ENCODE measurements at regions of chr5 and their contacts with region 1.

Region 1: DNA sequence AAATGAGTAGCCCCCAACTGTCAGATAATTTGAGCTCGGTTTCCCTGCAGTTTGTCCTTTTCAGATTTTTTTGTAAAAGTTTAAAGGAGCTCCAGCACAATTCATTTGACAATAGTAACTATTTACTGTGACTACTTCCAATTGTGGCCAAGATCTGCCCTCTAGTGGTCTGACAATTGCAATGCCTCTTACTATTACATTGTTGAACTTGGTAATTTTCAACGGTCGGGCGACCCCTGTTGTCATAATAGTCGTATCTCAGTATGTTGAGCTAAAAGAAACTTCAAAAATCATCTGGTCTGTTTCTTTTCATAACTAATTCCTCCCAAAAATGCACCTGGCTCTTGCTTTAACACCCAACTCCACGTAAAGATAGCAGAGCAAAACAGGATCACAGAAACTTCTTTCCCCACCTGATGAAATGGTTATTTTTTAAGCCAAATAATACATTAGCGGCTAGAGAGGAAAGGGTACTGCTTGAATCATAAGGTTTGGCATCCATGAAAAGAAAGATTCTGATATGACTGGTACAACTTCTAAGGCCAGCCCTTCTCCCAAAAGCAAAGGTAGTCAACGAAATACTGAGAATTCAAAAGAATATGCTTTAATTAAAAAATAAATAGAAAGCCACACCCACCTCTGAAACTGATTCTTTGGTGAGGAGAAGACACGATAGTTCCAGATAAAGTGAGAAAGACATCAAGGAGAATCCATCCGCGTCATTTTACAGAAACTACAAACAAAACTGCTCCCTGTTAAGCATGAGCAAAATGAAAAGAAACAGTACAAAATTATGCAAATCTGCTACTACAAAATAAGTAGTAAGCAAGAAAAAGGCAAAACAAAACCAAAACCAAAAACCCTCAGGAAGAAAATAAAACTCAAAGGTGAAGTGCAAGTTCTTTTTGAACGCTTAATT is 76.9 kb upstream of the HTR4 start:
- DNase-seq: peak; percentile 72
- H3K4me3 ChIP-seq: no peak overlapping the region; the same call in 1 of the 2 replicates
- H3K27ac ChIP-seq: no peak overlapping the region
- H3K27me3 ChIP-seq: peaks cover 3% of the 10 kb centered on the region
- CTCF ChIP-seq: peak; percentile 84

Region 2: GRCh38 chr5:147949711-147950573 is 781.3 kb before region 1 on chr5:
- CTCF ChIA-PET with region 1: interaction called, 18 read pairs
- POLR2A ChIA-PET with region 1: no interaction called
- DNase-seq: no peak
- H3K4me3 ChIP-seq: no peak overlapping the region
- H3K27ac ChIP-seq: no peak overlapping the region
- H3K27me3 ChIP-seq: no peaks in the 10 kb centered on the region
- CTCF ChIP-seq: peak; percentile 66

Region 3: DNA sequence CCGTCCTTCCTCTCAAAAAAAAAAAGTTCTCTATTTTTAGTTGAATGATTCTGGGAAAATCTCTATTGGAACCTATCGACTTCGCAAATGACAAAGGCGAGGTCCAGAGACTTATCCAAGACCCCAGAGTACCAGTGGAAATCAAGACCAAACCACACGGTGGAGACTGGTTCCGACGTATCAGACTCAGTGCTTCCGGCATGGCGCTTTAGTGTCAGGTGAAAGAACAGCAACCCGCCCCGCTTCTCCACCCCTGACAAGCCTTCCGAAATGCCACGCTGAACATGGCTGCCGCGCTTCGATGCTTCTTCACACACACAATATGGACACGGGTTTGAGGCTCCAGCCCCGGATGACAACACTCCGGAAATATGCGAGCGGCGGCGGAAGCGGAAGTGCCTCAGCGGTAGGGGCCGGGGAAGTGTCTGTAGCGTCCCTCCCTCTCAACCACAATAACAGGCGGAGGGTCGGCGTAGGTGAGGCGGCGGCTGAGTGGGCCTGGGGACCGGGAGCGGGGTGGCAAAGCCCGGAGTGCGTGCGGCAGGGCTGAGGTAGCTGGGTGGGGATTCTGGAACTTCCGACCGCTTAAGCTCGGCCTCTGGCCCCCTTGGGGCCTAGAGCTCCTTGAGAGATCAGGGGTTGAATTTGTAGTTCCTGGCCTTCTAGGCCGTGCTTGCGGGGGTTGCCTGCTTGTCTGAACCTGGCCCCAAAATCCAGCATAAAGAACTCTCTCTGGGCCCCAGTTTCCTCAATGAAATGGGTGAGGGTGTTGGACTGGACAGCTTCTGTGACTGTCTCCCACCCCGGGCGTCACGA is 347.4 kb before region 1 on chr5 and contains the start of gene FBXO38:
- CTCF ChIA-PET with region 1: interaction called, 28 read pairs
- POLR2A ChIA-PET with region 1: no interaction called
- DNase-seq: peak; percentile 86
- H3K4me3 ChIP-seq: peak within 1 kb of the TSS; percentile 78
- H3K27ac ChIP-seq: peak within 1 kb of the TSS; percentile 90
- H3K27me3 ChIP-seq: no peaks in the 10 kb centered on the region
- CTCF ChIP-seq: no peak
- polyA plus RNA-seq, gene FBXO38: 40.9 and 42.5 TPM in 2 replicates

Region 4: DNA sequence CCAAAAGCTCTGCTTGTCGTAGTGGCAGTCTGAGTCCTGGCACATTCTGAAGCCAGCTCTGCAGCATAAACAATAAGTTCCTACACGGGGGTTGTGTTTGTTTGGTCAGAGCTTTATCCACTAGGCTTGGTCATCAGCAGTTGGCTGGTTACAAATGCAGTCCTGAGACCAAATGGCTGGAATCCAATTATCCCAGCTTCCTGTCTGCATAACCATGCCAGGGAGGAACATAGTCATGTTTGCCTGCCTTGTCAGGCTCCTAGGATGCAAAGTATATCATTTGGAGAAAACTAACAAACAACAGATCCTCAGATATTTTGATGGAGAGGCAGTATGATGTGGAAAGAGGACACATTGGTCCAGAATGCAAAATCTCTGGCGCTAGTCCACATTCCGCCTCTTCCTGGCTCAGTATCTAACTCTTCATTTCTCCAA is 261.7 kb before region 1 on chr5:
- CTCF ChIA-PET with region 1: interaction called, 32 read pairs
- POLR2A ChIA-PET with region 1: no interaction called
- DNase-seq: peak; percentile 13
- H3K4me3 ChIP-seq: no peak overlapping the region
- H3K27ac ChIP-seq: no peak overlapping the region
- H3K27me3 ChIP-seq: no peaks in the 10 kb centered on the region
- CTCF ChIP-seq: no peak

Region 5: GRCh38 chr5:148620091-148620490 is 111.1 kb before region 1 on chr5:
- CTCF ChIA-PET with region 1: no interaction called
- POLR2A ChIA-PET with region 1: no interaction called
- DNase-seq: no peak
- H3K4me3 ChIP-seq: no peak overlapping the region
- H3K27ac ChIP-seq: no peak overlapping the region
- H3K27me3 ChIP-seq: no peaks in the 10 kb centered on the region
- CTCF ChIP-seq: no peak

Region 6: GRCh38 chr5:148820461-148821395 is 89.5 kb after region 1 on chr5:
- CTCF ChIA-PET with region 1: interaction called, 12 read pairs
- POLR2A ChIA-PET with region 1: no interaction called
- DNase-seq: no peak
- H3K4me3 ChIP-seq: no peak overlapping the region
- H3K27ac ChIP-seq: no peak overlapping the region
- H3K27me3 ChIP-seq: no peaks in the 10 kb centered on the region
- CTCF ChIP-seq: peak; percentile 68

Region 7: DNA sequence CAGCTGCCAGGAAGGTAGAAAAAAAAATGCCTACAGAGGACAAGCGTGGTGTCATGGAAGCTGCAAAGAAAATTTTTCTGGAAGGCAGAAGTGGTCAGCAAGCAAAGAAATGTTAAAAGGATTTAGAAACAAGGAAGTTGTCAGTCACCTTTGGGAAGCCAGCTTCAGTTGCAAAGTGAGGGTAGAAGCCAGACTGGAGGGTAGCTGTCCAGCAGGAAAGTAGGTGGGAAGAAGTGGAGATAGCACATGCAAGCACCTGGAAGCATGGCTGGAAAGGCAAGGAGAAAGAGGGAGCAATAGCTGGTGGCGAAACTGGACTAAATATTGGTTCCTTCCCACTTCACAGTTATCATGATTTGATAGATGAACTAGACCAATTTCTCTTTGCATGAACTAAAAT is 149.5 kb after region 1 on chr5:
- CTCF ChIA-PET with region 1: no interaction called
- POLR2A ChIA-PET with region 1: no interaction called
- DNase-seq: no peak
- H3K4me3 ChIP-seq: no peak overlapping the region
- H3K27ac ChIP-seq: no peak overlapping the region
- H3K27me3 ChIP-seq: no peaks in the 10 kb centered on the region
- CTCF ChIP-seq: no peak

Region 8: GRCh38 chr5:149018909-149019443 is 287.8 kb after region 1 on chr5:
- CTCF ChIA-PET with region 1: interaction called, 12 read pairs
- POLR2A ChIA-PET with region 1: no interaction called
- DNase-seq: no peak
- H3K4me3 ChIP-seq: no peak overlapping the region
- H3K27ac ChIP-seq: no peak overlapping the region
- H3K27me3 ChIP-seq: no peaks in the 10 kb centered on the region
- CTCF ChIP-seq: no peak

Region 9: DNA sequence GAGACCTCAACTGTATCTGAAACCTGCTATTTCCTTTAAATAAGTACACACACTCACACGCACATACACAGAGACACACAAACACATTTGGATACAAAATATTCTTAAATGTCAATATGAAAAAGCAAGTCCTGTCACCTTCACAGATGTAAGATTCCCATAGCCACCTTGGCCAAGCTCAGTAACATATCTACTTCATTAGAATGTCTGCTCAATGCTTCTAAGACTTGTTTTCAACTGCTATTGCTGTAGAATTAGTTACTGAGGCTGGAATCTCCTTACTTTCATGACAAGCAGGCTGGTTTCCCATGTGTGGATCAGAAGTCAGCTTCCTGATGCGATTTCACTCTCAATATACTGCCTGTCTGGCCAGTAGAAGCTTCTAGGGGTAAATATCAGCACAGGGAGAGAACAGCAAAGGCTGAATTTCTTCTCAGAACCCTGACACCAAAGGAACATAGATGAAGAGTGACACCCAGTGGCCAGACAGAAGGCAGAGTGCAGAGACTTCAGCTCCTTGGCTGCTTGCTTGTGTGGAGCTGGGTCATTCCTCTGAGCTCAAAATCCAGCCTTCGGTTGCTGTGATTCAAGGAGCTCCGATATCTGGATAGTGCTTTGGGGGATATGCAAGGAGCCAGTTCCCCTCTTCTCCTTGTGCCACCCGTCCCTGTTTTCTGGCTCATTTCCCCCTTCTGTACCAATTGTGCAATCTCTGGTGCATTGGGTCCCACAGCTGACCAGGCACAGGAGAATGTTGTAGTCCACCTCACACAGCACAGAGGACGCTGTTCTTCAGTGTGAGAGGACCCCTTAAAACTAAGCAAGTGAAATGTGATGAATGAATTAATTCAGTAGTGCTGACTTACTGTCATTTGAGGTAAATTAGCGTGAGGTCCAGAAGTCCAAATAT is 383.5 kb after region 1 on chr5:
- CTCF ChIA-PET with region 1: interaction called, 750 read pairs
- POLR2A ChIA-PET with region 1: interaction called, 3 read pairs
- DNase-seq: peak; percentile 69
- H3K4me3 ChIP-seq: no peak overlapping the region
- H3K27ac ChIP-seq: no peak overlapping the region
- H3K27me3 ChIP-seq: no peaks in the 10 kb centered on the region
- CTCF ChIP-seq: peak; percentile 87